Breast epithelium (tissue), 4 donors: ENCODE measurements at regions of chr9 and their contacts with region 1.

Region 1: DNA sequence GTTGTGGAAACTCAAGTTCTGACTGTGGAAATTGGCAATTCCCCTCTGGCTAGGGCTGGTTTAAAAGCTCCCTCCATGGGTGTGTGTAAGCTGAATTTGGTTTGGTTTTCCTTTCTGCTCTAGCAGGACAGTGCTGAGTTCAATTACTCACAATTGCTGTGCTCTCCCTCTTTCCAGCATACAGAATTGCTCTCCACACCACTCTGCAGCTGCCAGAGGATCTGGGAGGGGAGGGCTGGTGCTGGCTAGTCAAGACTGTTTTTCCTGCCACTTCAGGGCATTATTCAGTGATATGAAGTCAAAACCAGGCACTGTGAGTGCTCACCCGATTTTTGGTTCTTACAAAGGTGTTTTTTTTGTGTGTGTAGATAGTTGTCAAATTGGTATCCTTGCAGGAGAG is 336.9 kb upstream of the SLC24A2 start:
- DNase-seq: no peak
- H3K4me3 ChIP-seq: no peak overlapping the region
- H3K27ac ChIP-seq: no peak overlapping the region
- H3K4me1 ChIP-seq: no peaks in the 10 kb centered on the region
- H3K27me3 ChIP-seq: no peaks in the 10 kb centered on the region
- CTCF ChIP-seq: no peak
- POLR2A ChIP-seq: no peak

Region 2: GRCh38 chr9:20065796-20066700 is 59.7 kb before region 1 on chr9:
- intact Hi-C with region 1: no loop called
- DNase-seq: no peak
- H3K4me3 ChIP-seq: no peak overlapping the region
- H3K27ac ChIP-seq: no peak overlapping the region
- H3K4me1 ChIP-seq: no peaks in the 10 kb centered on the region
- H3K27me3 ChIP-seq: no peaks in the 10 kb centered on the region
- CTCF ChIP-seq: no peak
- POLR2A ChIP-seq: no peak

Region 3: GRCh38 chr9:21031091-21031807 is 905.5 kb after region 1 on chr9 and contains the start of gene HACD4:
- intact Hi-C with region 1: loop called (anchors 5 kb)
- DNase-seq: peak in 1 of 2 donors; percentile 31
- H3K4me3 ChIP-seq: peak within 1 kb of the TSS; percentile 58 to 81 (median 69)
- H3K27ac ChIP-seq: peak within 1 kb of the TSS; percentile 80
- H3K4me1 ChIP-seq: no peaks in the 10 kb centered on the region
- H3K27me3 ChIP-seq: no peaks in the 10 kb centered on the region
- CTCF ChIP-seq: no peak
- POLR2A ChIP-seq: no peak
- total RNA-seq, gene HACD4: 3.3 to 5.1 (median 4.0) TPM

Region 4: DNA sequence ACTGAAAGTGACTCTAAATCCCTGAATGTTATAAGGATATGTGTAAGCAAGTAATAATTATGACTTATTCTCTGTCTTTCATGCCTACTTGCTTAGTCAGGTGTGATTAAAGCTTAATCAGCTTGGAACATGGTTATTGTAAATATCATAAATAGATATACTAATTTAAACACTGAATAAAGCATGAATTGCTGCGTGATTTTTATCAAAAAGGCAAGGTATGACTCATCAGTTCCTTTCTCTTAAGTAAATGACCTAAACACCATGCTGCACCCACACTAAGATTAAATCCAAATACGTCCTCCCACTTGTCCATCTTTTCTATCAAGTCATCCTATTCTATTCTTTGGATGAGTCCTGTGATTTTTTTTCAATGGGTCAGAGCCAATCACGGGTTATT is 1552.1 kb after region 1 on chr9:
- intact Hi-C with region 1: no loop called
- DNase-seq: no peak
- H3K4me3 ChIP-seq: no peak overlapping the region
- H3K27ac ChIP-seq: no peak overlapping the region
- H3K4me1 ChIP-seq: no peaks in the 10 kb centered on the region
- H3K27me3 ChIP-seq: no peaks in the 10 kb centered on the region
- CTCF ChIP-seq: no peak
- POLR2A ChIP-seq: no peak